Ovary (tissue), 10 donors: ENCODE measurements at regions of chr1 and their contacts with region 1.

Region 1: DNA sequence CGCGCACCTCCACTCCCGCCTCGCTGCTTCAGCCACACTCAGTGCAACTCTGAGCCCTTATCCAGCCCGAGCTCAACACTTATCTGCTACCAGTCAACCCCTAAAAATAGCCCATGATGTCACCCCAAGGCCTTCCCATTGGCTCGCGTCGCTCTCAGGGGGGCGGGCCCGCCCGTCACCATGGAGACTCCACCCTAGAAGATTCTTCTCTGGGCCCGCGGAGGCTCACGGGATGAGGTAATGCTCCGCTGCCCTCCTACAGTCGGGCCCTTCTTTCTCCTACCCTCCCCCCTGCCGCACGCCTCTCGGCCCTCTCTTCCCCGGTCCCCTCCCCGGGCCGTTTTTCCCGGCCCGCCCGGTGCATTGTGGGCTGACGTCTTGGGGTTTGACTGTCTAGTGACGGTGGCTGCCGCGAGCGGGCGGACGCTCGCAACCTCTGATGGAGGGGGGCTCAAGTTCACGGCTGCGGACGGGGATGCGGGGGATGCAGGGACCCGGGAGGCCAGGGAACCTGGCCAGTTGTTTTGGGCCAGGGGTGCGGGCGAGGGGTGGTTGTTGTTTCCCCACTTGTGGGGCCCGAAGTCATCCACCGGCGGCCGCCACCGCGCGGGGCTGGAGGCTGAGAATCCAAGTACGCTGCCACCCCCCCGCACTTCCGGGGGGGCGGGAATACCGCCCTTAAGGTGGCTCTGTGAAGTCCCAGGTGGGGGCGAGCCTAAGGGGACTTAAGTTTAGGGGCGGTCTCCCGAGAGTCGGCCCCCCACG is at the start of gene JUN:
- DNase-seq: peak; percentile 100
- H3K4me3 ChIP-seq: peak within 1 kb of the TSS; percentile 89
- H3K27ac ChIP-seq: peak within 1 kb of the TSS; percentile 93 to 99
- H3K4me1 ChIP-seq: peaks cover 1% of the 10 kb centered on the region
- H3K27me3 ChIP-seq: no peaks in the 10 kb centered on the region
- CTCF ChIP-seq: peak in 1 of 3 donors; percentile 9
- EP300 ChIP-seq: peak; percentile 80
- POLR2A ChIP-seq: peak; percentile 81
- total RNA-seq, gene JUN: 50.7 to 740 (median 155) TPM

Region 2: GRCh38 chr1:58903514-58904298 is 119.5 kb after region 1 on chr1:
- intact Hi-C with region 1: loop called in 3 of 4 experiments (anchors 2 to 10 kb)
- DNase-seq: peak; percentile 92 to 96 (median 93)
- H3K4me3 ChIP-seq: peak overlapping the region; percentile 46
- H3K27ac ChIP-seq: peak overlapping the region; percentile 92 to 95
- H3K4me1 ChIP-seq: peaks cover 8% of the 10 kb centered on the region
- H3K27me3 ChIP-seq: no peaks in the 10 kb centered on the region
- CTCF ChIP-seq: no peak
- EP300 ChIP-seq: peak; percentile 54
- POLR2A ChIP-seq: peak; percentile 88

Region 3: GRCh38 chr1:59076612-59077011 is 292.4 kb after region 1 on chr1:
- intact Hi-C with region 1: loop called in 1 of 4 experiments (anchors 10 kb)
- DNase-seq: no peak
- H3K4me3 ChIP-seq: no peak overlapping the region
- H3K27ac ChIP-seq: no peak overlapping the region
- H3K4me1 ChIP-seq: no peaks in the 10 kb centered on the region
- H3K27me3 ChIP-seq: no peaks in the 10 kb centered on the region
- CTCF ChIP-seq: peak in 1 of 3 donors; percentile 28
- EP300 ChIP-seq: no peak
- POLR2A ChIP-seq: no peak

Region 4: GRCh38 chr1:59296358-59297256 is 512.4 kb after region 1 on chr1 and contains the start of gene FGGY:
- intact Hi-C with region 1: loop called in 3 of 4 experiments (anchors 2 to 5 kb)
- DNase-seq: peak; percentile 95 to 96 (median 96)
- H3K4me3 ChIP-seq: peak within 1 kb of the TSS; percentile 51
- H3K27ac ChIP-seq: peak within 1 kb of the TSS; percentile 85 to 97
- H3K4me1 ChIP-seq: peaks cover 6% of the 10 kb centered on the region
- H3K27me3 ChIP-seq: no peaks in the 10 kb centered on the region
- CTCF ChIP-seq: no peak
- EP300 ChIP-seq: peak; percentile 41
- POLR2A ChIP-seq: peak; percentile 90
- total RNA-seq, gene FGGY: 28.8 to 62.0 (median 50.5) TPM

Region 5: DNA sequence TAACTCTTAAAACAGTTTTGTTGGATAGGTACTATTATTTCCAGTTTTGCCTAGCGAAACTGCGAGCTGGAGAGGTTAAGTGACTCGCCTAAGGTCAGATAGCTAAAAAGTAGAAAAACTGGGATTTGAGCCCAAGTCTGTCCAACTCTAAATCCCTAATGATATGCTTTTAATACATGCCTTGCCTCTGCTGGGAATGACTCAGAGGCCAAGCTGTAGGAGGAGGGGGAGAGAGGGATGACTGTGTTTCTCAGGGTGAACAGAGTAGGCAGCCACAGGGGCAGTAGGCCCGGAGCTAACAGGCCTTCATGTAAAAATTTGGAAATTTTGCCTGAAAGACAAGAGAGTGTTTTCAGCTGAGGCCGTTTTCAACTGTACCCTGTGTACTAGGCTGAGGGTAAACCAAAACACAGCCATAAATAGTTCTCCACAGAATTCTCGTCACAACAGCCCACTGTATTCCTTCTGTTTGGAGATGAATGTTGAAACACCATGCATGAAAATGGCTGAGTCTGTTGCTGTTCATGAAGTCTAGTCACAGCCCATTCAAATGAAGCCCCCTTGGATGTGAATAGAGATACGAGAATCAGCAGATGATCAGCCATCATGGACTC is 923.1 kb after region 1 on chr1:
- intact Hi-C with region 1: loop called in 3 of 4 experiments (anchors 5 to 10 kb)
- DNase-seq: peak; percentile 49 to 77 (median 62)
- H3K4me3 ChIP-seq: no peak overlapping the region
- H3K27ac ChIP-seq: peak overlapping the region in 1 of 2 donors; percentile 41
- H3K4me1 ChIP-seq: peaks cover 11% of the 10 kb centered on the region
- H3K27me3 ChIP-seq: no peaks in the 10 kb centered on the region
- CTCF ChIP-seq: no peak
- EP300 ChIP-seq: no peak
- POLR2A ChIP-seq: no peak